WTC11 (cell line): ENCODE measurements at regions of chr5 and their contacts with region 1.

Region 1: GRCh38 chr5:86463339-86463738 is 154.4 kb upstream of the COX7C start:
- DNase-seq: peak; percentile 60
- ATAC-seq: peak; percentile 100
- H3K4me3 Mint-ChIP-seq: no peak overlapping the region
- H3K27ac Mint-ChIP-seq: no peak overlapping the region
- H3K4me1 Mint-ChIP-seq: peaks cover 10% of the 10 kb centered on the region; the same call in 1 of the 2 replicates
- H3K27me3 Mint-ChIP-seq: no peaks in the 10 kb centered on the region
- CTCF ChIP-seq: peak; percentile 28; the same call in 1 of the 2 replicates

Region 2: DNA sequence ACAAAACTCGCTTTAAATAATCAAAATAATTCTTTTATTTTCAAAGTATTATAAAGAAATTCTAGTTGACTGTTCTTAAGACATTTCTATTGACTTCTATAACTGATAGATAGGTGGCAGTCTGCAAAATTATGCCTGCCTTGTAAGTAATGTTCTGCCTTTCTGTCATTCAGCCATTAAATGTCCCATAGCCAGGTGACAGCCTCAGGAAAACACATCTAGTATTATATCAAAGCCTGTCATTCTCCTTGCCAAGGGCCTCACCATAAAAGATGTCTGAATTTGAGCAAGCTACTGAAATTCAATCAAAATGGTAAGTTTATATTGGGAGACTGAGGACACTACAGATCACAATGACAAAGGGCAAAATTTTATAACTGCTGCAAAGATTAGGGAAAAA is 16.0 kb before region 1 on chr5:
- CTCF ChIA-PET with region 1: no interaction called
- POLR2A ChIA-PET with region 1: no interaction called
- DNase-seq: no peak
- ATAC-seq: no peak
- H3K4me3 Mint-ChIP-seq: no peak overlapping the region
- H3K27ac Mint-ChIP-seq: no peak overlapping the region
- H3K4me1 Mint-ChIP-seq: no peaks in the 10 kb centered on the region
- H3K27me3 Mint-ChIP-seq: no peaks in the 10 kb centered on the region
- CTCF ChIP-seq: no peak

Region 3: DNA sequence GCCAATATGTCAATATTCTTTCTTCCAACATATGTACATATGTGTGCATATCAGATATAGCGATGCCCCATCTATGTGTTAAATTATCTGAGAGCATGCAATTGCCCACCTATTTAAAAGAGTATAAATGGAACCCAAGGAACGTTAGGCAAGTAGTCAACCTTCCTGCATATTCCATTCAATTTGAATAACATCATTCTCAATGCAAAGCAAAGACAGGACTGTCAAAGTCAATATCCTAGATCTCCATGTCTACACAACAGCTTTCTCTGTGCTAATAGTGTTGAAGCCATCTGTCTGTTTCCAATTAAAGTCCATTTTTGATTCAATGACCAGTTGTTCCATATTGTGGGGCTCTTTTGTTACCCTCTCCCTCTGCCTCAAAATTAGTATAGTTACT is 69.1 kb after region 1 on chr5:
- CTCF ChIA-PET with region 1: no interaction called
- POLR2A ChIA-PET with region 1: no interaction called
- DNase-seq: no peak
- ATAC-seq: no peak
- H3K4me3 Mint-ChIP-seq: no peak overlapping the region
- H3K27ac Mint-ChIP-seq: no peak overlapping the region
- H3K4me1 Mint-ChIP-seq: no peaks in the 10 kb centered on the region
- H3K27me3 Mint-ChIP-seq: no peaks in the 10 kb centered on the region
- CTCF ChIP-seq: no peak

Region 4: DNA sequence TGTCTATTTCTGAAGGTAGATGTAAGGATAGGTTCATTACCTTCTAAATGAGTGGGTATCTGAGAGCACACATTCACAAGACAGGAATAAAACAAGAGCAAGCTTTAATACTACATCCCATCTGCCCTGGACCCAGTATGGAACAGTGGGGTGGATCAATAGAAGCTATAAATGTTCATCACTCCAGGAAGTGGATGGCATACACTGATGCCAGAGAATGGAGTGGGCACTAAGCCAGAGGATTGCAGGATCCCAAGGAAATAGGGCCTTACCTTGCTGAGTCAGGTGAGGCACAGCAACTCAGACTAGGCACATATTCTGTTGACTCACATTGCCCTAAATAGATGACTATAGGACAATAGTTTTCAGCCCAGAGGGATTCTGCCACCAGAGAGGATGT is 133.1 kb after region 1 on chr5:
- CTCF ChIA-PET with region 1: no interaction called
- POLR2A ChIA-PET with region 1: no interaction called
- DNase-seq: no peak
- ATAC-seq: no peak
- H3K4me3 Mint-ChIP-seq: no peak overlapping the region
- H3K27ac Mint-ChIP-seq: peak overlapping the region; percentile 33; the same call in 1 of the 2 replicates
- H3K4me1 Mint-ChIP-seq: peaks cover 18% of the 10 kb centered on the region
- H3K27me3 Mint-ChIP-seq: no peaks in the 10 kb centered on the region
- CTCF ChIP-seq: no peak

Region 5: GRCh38 chr5:86679529-86679928 is 216.2 kb after region 1 on chr5:
- CTCF ChIA-PET with region 1: interaction called, 10 read pairs
- POLR2A ChIA-PET with region 1: no interaction called
- DNase-seq: no peak
- ATAC-seq: peak; percentile 85
- H3K4me3 Mint-ChIP-seq: no peak overlapping the region
- H3K27ac Mint-ChIP-seq: no peak overlapping the region
- H3K4me1 Mint-ChIP-seq: no peaks in the 10 kb centered on the region
- H3K27me3 Mint-ChIP-seq: no peaks in the 10 kb centered on the region
- CTCF ChIP-seq: peak; percentile 53

Region 6: GRCh38 chr5:86831128-86831527 is 367.8 kb after region 1 on chr5:
- CTCF ChIA-PET with region 1: no interaction called
- POLR2A ChIA-PET with region 1: no interaction called
- DNase-seq: no peak
- ATAC-seq: no peak
- H3K4me3 Mint-ChIP-seq: no peak overlapping the region
- H3K27ac Mint-ChIP-seq: no peak overlapping the region
- H3K4me1 Mint-ChIP-seq: no peaks in the 10 kb centered on the region
- H3K27me3 Mint-ChIP-seq: no peaks in the 10 kb centered on the region
- CTCF ChIP-seq: no peak